ENCODE measurements at regions of chr12 and their contacts with region 1.

Region 1: DNA sequence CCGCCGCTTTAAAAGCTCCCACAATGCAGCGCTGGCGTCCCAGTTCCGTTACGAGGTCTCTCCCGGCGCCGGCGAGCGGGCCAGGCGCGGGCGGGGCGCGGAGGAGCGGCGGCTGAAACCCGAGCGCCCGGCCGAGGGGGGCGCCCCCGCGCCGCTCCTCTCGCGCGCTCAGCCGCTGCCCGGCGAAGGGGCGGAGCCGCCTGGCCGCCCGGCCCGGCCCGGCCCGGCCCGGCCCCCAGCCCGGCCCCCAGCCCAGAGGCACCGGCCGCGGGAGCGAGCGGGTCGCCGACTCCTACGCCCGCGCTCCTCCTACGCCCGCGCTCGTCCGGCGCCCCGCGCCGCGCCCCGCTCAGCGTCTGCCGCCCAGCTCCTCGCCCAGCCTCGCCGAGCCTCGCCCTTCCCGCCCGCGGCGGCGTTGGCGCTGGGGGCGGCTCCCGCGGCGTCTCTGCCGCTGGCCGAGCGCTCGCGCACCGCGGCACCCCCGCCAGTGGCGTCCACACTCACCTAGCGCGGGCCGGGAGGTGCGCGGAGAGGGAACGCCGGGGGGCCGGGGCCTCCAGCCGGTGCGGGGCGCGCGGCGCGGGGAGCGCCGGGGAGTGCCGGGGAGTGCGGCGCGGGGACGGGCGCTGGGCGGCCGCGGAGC is at the start of gene RASSF8:
- DNase-seq: peak; percentile 81 to 90
- ATAC-seq: peak; percentile 91
- H3K4me3 ChIP-seq: peak within 1 kb of the TSS; percentile 84 to 99
- H3K27ac ChIP-seq: peak within 1 kb of the TSS; percentile 97 to 100
- H3K4me1 ChIP-seq: peaks cover 0 to 8% of the 10 kb centered on the region in 2 donors
- H3K27me3 ChIP-seq: no peaks in the 10 kb centered on the region
- total RNA-seq, gene RASSF8: 80.9 to 86.7 TPM

Region 2: GRCh38 chr12:25979563-25979962 is 21.0 kb after region 1 on chr12:
- intact Hi-C with region 1: loop called in 1 of 2 experiments (anchors 2 kb)
- DNase-seq: no peak
- ATAC-seq: no peak
- H3K4me3 ChIP-seq: no peak overlapping the region
- H3K27ac ChIP-seq: no peak overlapping the region
- H3K4me1 ChIP-seq: peaks cover 2 to 5% of the 10 kb centered on the region in 2 donors
- H3K27me3 ChIP-seq: no peaks in the 10 kb centered on the region

Region 3: GRCh38 chr12:26011099-26011498 is 52.5 kb after region 1 on chr12:
- intact Hi-C with region 1: loop called (anchors 5 kb)
- DNase-seq: no peak
- ATAC-seq: peak; percentile 91
- H3K4me3 ChIP-seq: no peak overlapping the region
- H3K27ac ChIP-seq: peak overlapping the region; percentile 91 to 95
- H3K4me1 ChIP-seq: peaks cover 4 to 15% of the 10 kb centered on the region in 2 donors
- H3K27me3 ChIP-seq: no peaks in the 10 kb centered on the region

Region 4: DNA sequence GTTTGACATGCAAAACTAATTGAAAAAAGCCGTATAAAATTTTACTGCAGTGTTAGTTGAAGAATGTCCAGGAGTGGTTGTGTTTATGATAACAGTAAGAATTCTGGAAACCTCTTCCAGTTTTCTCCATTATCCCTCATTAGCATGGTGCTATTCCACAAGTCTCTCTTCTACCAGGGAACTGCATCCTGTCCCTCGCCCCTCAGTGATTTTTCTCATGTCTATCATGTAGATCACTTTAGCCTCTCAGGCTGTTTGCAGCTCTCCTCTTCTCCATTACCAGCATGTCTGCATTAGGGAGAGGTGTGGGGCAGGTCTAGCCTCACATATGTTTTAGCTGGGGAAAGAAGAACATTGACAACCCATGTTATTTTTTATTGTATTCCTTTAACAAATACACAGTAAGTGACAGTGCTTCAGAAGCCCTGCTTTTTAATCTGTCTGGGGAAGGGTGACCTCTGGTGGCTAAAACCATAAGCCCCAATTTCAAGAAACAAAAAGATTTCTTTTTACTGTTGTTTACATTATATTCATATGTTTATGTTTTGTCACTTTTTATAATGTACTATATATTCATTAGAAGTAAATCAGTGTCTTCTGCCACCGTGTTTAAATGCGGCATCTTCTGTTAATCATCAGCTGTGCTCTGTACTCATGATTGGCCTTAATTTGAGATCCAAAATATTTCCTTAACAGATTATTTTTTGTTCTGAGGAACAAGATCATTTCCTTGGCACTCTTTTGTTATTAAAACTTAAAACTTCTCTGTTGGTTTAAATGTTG is 70.6 kb after region 1 on chr12:
- intact Hi-C with region 1: loop called in 1 of 2 experiments (anchors 5 kb)
- DNase-seq: no peak
- ATAC-seq: no peak
- H3K4me3 ChIP-seq: no peak overlapping the region
- H3K27ac ChIP-seq: no peak overlapping the region
- H3K4me1 ChIP-seq: peaks cover 8 to 10% of the 10 kb centered on the region in 2 donors
- H3K27me3 ChIP-seq: no peaks in the 10 kb centered on the region

Measured in aorta (tissue), 5 donors.